CD8-positive, alpha-beta T cell (primary cell): ENCODE measurements at regions of chr10 and their contacts with region 1.

Region 1: GRCh38 chr10:33008499-33009243 is 50.6 kb upstream of the ITGB1 start:
- DNase-seq: peak in 8 of 9 experiments; percentile 44 to 82 (median 65)
- ATAC-seq: peak; percentile 59
- H3K4me3 ChIP-seq: peak overlapping the region; percentile 34 to 36
- H3K4me3 Mint-ChIP-seq: peak overlapping the region; percentile 68
- H3K27ac ChIP-seq: peak overlapping the region in 1 of 2 experiments; percentile 47
- H3K27ac Mint-ChIP-seq: peak overlapping the region; percentile 49
- H3K4me1 ChIP-seq: peaks cover 9% of the 10 kb centered on the region
- H3K4me1 Mint-ChIP-seq: peaks cover 35% of the 10 kb centered on the region
- H3K27me3 ChIP-seq: no peaks in the 10 kb centered on the region
- H3K27me3 Mint-ChIP-seq: peaks cover 12% of the 10 kb centered on the region
- CTCF ChIP-seq: peak; percentile 100

Region 2: GRCh38 chr10:32256613-32257437 is 751.8 kb before region 1 on chr10:
- CTCF ChIA-PET with region 1: interaction called, 3 read pairs
- POLR2A ChIA-PET with region 1: no interaction called
- intact Hi-C with region 1: loop called (anchors 1 to 10 kb)
- DNase-seq: peak; percentile 43 to 81 (median 67)
- ATAC-seq: peak; percentile 73
- H3K4me3 ChIP-seq: no peak overlapping the region
- H3K4me3 Mint-ChIP-seq: no peak overlapping the region
- H3K27ac ChIP-seq: no peak overlapping the region
- H3K27ac Mint-ChIP-seq: no peak overlapping the region
- H3K4me1 ChIP-seq: no peaks in the 10 kb centered on the region
- H3K4me1 Mint-ChIP-seq: peaks cover 5% of the 10 kb centered on the region
- H3K27me3 ChIP-seq: no peaks in the 10 kb centered on the region
- H3K27me3 Mint-ChIP-seq: no peaks in the 10 kb centered on the region
- CTCF ChIP-seq: peak; percentile 89

Region 3: GRCh38 chr10:32445740-32446535 is 562.7 kb before region 1 on chr10 and contains the start of gene CCDC7:
- CTCF ChIA-PET with region 1: interaction called, 5 read pairs
- POLR2A ChIA-PET with region 1: no interaction called
- intact Hi-C with region 1: loop called in 1 of 2 experiments (anchors 2 kb)
- DNase-seq: peak; percentile 73 to 96 (median 83)
- ATAC-seq: peak; percentile 95
- H3K4me3 ChIP-seq: peak within 1 kb of the TSS; percentile 68 to 99
- H3K4me3 Mint-ChIP-seq: peak within 1 kb of the TSS; percentile 94
- H3K27ac ChIP-seq: peak within 1 kb of the TSS; percentile 91 to 98
- H3K27ac Mint-ChIP-seq: peak within 1 kb of the TSS; percentile 100
- H3K4me1 ChIP-seq: peaks cover 4% of the 10 kb centered on the region
- H3K4me1 Mint-ChIP-seq: peaks cover 28% of the 10 kb centered on the region
- H3K27me3 ChIP-seq: no peaks in the 10 kb centered on the region
- H3K27me3 Mint-ChIP-seq: no peaks in the 10 kb centered on the region
- CTCF ChIP-seq: peak; percentile 45
- total RNA-seq, gene CCDC7: 50.1 to 59.0 TPM

Region 4: DNA sequence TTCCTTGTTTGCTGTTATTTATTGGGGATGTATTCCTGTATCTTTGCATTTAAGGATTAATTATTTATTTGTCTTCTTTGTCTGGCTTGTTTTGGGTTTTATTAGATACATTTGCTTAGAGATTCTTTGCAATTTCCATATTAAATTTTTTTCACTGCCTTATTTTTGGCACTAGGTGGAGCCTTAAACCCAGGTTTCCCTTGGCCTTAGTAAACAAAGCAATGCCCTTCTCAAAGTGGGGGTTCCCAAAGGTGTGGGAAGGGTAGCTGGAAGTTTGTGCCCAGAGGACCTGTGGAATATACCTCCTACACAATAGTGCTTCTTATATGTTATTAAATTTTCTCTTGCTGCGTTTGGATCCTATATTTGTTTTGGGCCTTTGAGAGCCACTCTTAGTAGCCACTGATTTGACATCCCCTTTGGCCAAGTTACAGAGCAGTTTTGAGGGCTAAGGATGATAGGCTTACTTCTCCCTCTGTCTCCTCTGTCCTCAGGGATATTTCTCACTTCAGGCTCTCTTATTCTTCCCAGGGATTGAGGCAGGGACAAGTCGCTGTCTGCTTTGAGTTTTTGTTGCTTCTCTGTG is 213.0 kb before region 1 on chr10:
- CTCF ChIA-PET with region 1: interaction called, 8 read pairs
- POLR2A ChIA-PET with region 1: interaction called, 3 read pairs
- intact Hi-C with region 1: loop called (anchors 1 kb)
- DNase-seq: peak in 2 of 9 experiments; percentile 53 to 64
- ATAC-seq: no peak
- H3K4me3 ChIP-seq: no peak overlapping the region
- H3K4me3 Mint-ChIP-seq: no peak overlapping the region
- H3K27ac ChIP-seq: no peak overlapping the region
- H3K27ac Mint-ChIP-seq: no peak overlapping the region
- H3K4me1 ChIP-seq: no peaks in the 10 kb centered on the region
- H3K4me1 Mint-ChIP-seq: no peaks in the 10 kb centered on the region
- H3K27me3 ChIP-seq: no peaks in the 10 kb centered on the region
- H3K27me3 Mint-ChIP-seq: peaks cover 3% of the 10 kb centered on the region
- CTCF ChIP-seq: peak; percentile 53

Region 5: DNA sequence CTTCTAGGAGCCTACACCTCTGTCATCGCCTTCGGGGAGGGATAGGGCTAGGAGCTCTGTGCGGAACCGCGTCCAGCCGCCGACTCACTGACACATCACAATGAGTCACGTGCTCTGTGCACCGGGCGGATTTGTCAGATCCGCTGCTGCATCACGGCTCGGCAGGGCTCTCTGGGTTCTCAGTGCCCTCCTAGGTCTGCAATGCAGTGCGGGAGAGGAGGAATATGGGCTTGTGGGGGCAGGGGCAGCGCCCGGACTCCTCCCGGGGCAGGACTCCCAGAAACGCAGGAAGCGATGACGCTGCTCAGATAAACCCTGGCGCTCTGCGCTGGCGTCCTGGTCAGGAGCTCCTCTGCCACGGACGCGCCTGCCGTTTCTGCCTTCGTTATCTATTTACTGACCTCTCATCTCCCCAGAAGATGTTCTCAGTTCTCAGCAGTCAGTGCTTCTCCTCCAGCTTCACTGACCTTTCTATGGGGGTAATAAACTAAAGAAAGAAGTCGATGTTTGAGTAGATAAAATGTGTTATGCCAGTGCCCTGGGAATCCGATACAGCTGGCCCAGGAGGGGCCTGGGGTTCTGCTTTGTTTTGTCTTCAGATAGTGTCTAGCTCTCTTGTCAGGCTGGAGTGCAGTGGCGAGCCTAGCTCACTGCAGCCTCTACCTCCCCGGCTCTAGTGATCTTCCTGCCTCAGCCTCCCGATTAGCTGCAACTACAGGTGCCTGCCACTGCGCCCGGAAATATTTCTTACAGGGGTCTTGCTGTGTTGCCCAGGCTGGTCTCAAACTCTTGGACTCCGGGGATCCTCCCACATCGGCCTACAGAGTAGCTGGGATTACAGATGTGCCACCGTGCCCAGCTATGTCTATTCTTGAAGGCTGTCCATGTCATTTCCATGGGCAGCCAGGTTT is 27.9 kb before region 1 on chr10:
- CTCF ChIA-PET with region 1: interaction called, 12 read pairs
- POLR2A ChIA-PET with region 1: interaction called, 3 read pairs
- intact Hi-C with region 1: loop called in 1 of 2 experiments (anchors 2 kb)
- DNase-seq: peak; percentile 61 to 91 (median 85)
- ATAC-seq: peak; percentile 90
- H3K4me3 ChIP-seq: peak overlapping the region; percentile 52 to 66
- H3K4me3 Mint-ChIP-seq: peak overlapping the region; percentile 96
- H3K27ac ChIP-seq: peak overlapping the region; percentile 68 to 94
- H3K27ac Mint-ChIP-seq: peak overlapping the region; percentile 97
- H3K4me1 ChIP-seq: peaks cover 25% of the 10 kb centered on the region
- H3K4me1 Mint-ChIP-seq: peaks cover 34% of the 10 kb centered on the region
- H3K27me3 ChIP-seq: no peaks in the 10 kb centered on the region
- H3K27me3 Mint-ChIP-seq: no peaks in the 10 kb centered on the region
- CTCF ChIP-seq: no peak

Region 6: GRCh38 chr10:33073641-33074415 is 65.2 kb after region 1 on chr10:
- CTCF ChIA-PET with region 1: no interaction called
- POLR2A ChIA-PET with region 1: no interaction called
- intact Hi-C with region 1: no loop called
- DNase-seq: peak in 2 of 9 experiments; percentile 18 to 19
- ATAC-seq: no peak
- H3K4me3 ChIP-seq: no peak overlapping the region
- H3K4me3 Mint-ChIP-seq: no peak overlapping the region
- H3K27ac ChIP-seq: no peak overlapping the region
- H3K27ac Mint-ChIP-seq: no peak overlapping the region
- H3K4me1 ChIP-seq: no peaks in the 10 kb centered on the region
- H3K4me1 Mint-ChIP-seq: peaks cover 1% of the 10 kb centered on the region
- H3K27me3 ChIP-seq: no peaks in the 10 kb centered on the region
- H3K27me3 Mint-ChIP-seq: no peaks in the 10 kb centered on the region
- CTCF ChIP-seq: no peak

Region 7: GRCh38 chr10:33155720-33156638 is 147.3 kb after region 1 on chr10:
- CTCF ChIA-PET with region 1: interaction called, 22 read pairs
- POLR2A ChIA-PET with region 1: no interaction called
- intact Hi-C with region 1: loop called (anchors 1 to 5 kb)
- DNase-seq: peak in 4 of 9 experiments; percentile 37 to 81 (median 62)
- ATAC-seq: peak; percentile 92
- H3K4me3 ChIP-seq: no peak overlapping the region
- H3K4me3 Mint-ChIP-seq: no peak overlapping the region
- H3K27ac ChIP-seq: no peak overlapping the region
- H3K27ac Mint-ChIP-seq: no peak overlapping the region
- H3K4me1 ChIP-seq: peaks cover 21% of the 10 kb centered on the region
- H3K4me1 Mint-ChIP-seq: peaks cover 28% of the 10 kb centered on the region
- H3K27me3 ChIP-seq: no peaks in the 10 kb centered on the region
- H3K27me3 Mint-ChIP-seq: no peaks in the 10 kb centered on the region
- CTCF ChIP-seq: peak; percentile 63

Region 8: DNA sequence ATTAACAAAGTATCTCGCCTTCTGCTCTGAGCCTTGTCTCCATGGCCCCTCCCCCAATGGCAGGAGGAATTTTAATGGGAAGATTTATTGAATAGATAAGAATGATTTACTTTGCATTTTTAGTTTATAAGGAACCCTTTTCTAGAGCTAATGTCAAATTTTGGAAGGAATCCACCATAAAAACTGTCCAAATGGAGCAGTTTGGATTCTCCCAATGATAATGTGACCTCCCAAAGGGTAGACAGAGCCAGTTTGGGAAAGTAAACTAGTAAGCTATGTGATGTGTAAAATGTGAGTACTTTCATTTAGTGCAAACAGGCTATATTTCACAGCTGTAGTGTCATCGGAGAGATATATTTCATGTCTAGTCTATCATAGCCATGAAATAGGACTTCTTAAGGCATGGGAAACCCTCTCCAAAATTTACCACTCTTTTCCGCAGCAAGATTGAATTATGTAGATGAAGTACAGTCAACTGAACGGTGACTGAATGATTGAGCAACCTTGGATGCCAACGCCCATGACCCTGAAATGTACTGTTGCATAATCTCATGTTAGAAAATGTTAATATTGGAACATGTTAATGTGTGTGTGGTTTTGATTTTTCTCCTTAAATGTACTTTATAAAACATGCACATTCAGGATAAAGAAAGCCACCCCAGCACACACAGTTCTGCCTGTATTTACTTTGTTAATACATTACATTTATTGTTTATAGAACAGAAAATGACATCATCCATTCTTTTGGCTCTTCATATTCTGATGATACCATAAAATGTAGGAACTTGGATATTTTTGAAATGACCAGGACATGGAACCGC is 185.2 kb after region 1 on chr10:
- CTCF ChIA-PET with region 1: no interaction called
- POLR2A ChIA-PET with region 1: no interaction called
- intact Hi-C with region 1: no loop called
- DNase-seq: no peak
- ATAC-seq: no peak
- H3K4me3 ChIP-seq: no peak overlapping the region
- H3K4me3 Mint-ChIP-seq: no peak overlapping the region
- H3K27ac ChIP-seq: no peak overlapping the region
- H3K27ac Mint-ChIP-seq: no peak overlapping the region
- H3K4me1 ChIP-seq: no peaks in the 10 kb centered on the region
- H3K4me1 Mint-ChIP-seq: no peaks in the 10 kb centered on the region
- H3K27me3 ChIP-seq: no peaks in the 10 kb centered on the region
- H3K27me3 Mint-ChIP-seq: peaks cover 4% of the 10 kb centered on the region
- CTCF ChIP-seq: no peak